CD8-positive, alpha-beta T cell (primary cell): ENCODE measurements at regions of chr1 and their contacts with region 1.

Region 1: DNA sequence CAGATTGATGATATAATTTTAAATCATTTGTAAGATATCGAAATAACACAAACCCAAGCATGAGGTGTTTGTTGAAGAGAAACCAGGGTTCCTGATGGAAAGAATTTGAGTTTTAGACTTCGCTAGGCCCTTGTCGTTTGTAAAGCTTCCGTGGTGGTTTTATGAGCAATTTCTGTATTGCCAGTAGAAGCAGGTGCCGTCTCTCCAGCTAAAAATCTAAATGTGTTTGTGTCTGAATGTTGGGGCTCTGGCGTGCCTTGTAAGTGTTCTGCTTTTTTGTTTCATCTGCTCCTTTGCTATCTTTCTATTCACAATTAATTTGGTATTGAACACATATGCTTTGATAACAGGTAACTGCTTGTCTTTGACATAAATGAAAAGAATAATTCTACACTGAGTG is 27.5 kb downstream of the CHRM3 start:
- DNase-seq: no peak
- ATAC-seq: no peak
- H3K4me3 ChIP-seq: no peak overlapping the region
- H3K4me3 Mint-ChIP-seq: no peak overlapping the region
- H3K27ac ChIP-seq: no peak overlapping the region
- H3K27ac Mint-ChIP-seq: no peak overlapping the region
- H3K4me1 ChIP-seq: no peaks in the 10 kb centered on the region
- H3K4me1 Mint-ChIP-seq: no peaks in the 10 kb centered on the region
- H3K27me3 ChIP-seq: no peaks in the 10 kb centered on the region
- H3K27me3 Mint-ChIP-seq: no peaks in the 10 kb centered on the region
- CTCF ChIP-seq: no peak

Region 2: GRCh38 chr1:239467730-239468129 is 53.8 kb after region 1 on chr1:
- CTCF ChIA-PET with region 1: no interaction called
- POLR2A ChIA-PET with region 1: no interaction called
- intact Hi-C with region 1: no loop called
- DNase-seq: no peak
- ATAC-seq: no peak
- H3K4me3 ChIP-seq: no peak overlapping the region
- H3K4me3 Mint-ChIP-seq: no peak overlapping the region
- H3K27ac ChIP-seq: no peak overlapping the region
- H3K27ac Mint-ChIP-seq: no peak overlapping the region
- H3K4me1 ChIP-seq: no peaks in the 10 kb centered on the region
- H3K4me1 Mint-ChIP-seq: no peaks in the 10 kb centered on the region
- H3K27me3 ChIP-seq: no peaks in the 10 kb centered on the region
- H3K27me3 Mint-ChIP-seq: no peaks in the 10 kb centered on the region
- CTCF ChIP-seq: no peak

Region 3: DNA sequence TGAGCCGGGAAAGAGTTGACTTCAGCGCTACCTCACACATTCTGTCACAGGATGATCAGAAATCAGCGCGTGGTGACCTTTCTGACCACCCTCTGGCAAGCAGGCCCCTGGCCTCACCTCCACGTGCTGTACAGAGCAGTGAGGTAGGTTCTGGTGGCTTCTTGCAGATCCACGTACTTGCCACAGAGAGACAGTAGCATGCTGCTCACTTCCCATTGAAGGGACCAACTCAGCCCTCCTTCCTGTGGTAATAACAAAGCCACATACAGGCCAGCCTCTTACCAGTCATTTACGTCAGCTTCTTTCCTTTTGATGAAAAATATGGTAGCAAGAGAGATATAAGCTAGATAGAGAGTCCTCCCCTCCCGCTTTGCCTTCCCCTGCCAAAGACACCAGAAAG is 173.2 kb after region 1 on chr1:
- CTCF ChIA-PET with region 1: no interaction called
- POLR2A ChIA-PET with region 1: no interaction called
- intact Hi-C with region 1: loop called in 1 of 2 experiments (anchors 10 kb)
- DNase-seq: peak in 8 of 9 experiments; percentile 1 to 80 (median 42)
- ATAC-seq: peak; percentile 99
- H3K4me3 ChIP-seq: no peak overlapping the region
- H3K4me3 Mint-ChIP-seq: peak overlapping the region; percentile 20
- H3K27ac ChIP-seq: no peak overlapping the region
- H3K27ac Mint-ChIP-seq: peak overlapping the region; percentile 10
- H3K4me1 ChIP-seq: peaks cover 10% of the 10 kb centered on the region
- H3K4me1 Mint-ChIP-seq: peaks cover 14% of the 10 kb centered on the region
- H3K27me3 ChIP-seq: no peaks in the 10 kb centered on the region
- H3K27me3 Mint-ChIP-seq: no peaks in the 10 kb centered on the region
- CTCF ChIP-seq: peak; percentile 28

Region 4: GRCh38 chr1:239976130-239976968 is 562.4 kb after region 1 on chr1:
- CTCF ChIA-PET with region 1: no interaction called
- POLR2A ChIA-PET with region 1: no interaction called
- intact Hi-C with region 1: loop called in 1 of 2 experiments (anchors 5 kb)
- DNase-seq: peak in 4 of 9 experiments; percentile 44 to 55 (median 44)
- ATAC-seq: no peak
- H3K4me3 ChIP-seq: no peak overlapping the region
- H3K4me3 Mint-ChIP-seq: no peak overlapping the region
- H3K27ac ChIP-seq: no peak overlapping the region
- H3K27ac Mint-ChIP-seq: no peak overlapping the region
- H3K4me1 ChIP-seq: no peaks in the 10 kb centered on the region
- H3K4me1 Mint-ChIP-seq: no peaks in the 10 kb centered on the region
- H3K27me3 ChIP-seq: no peaks in the 10 kb centered on the region
- H3K27me3 Mint-ChIP-seq: no peaks in the 10 kb centered on the region
- CTCF ChIP-seq: peak; percentile 98